ENCODE measurements at regions of chr1 and their contacts with region 1.

Region 1: DNA sequence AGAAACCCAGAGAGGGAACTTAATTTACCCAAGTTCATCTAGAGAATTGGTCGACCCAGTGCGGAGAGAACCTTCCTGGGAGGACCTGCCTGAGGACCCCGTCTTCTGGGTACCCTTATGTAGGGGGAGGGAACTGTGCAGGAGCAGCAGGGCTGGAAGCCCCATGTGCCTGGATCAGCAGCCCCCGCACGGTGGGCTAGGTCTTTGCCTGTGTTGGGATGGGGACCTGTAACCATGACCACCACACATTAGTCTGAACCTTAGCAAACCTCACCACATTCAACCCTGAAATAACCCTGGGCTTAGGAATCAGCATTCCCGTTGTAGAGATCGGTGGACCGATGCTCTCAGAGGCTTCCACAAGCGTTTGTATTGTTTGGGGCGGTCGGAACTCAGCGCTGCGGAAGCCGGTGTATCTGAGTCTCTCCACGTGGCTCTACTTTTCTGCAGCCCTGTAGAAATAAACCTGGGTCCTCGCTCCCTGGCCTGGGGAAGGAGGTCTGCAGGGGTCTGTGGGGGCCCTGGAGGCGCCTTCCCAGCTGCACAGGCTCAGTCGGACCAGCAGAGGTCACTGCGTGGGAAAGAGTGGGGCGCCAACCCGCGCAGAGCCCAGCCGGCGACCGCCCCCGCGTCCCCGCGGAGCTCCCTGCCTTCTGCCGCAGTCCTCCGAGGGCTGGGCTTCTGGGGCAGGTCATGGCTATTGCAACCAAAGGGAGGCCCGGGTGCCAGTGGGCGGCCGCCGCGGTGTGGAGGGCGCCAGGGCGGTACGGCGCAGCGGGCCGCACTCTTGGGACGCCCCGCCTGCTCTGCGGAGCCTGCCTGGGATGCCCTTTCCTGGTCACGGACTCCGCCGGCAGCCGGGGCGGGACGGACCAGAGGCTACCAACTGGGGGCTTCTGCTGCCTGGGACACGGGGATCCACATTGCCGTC is 36.2 kb upstream of the KCNA10 start:
- DNase-seq: peak; percentile 71
- H3K4me3 Mint-ChIP-seq: no peak overlapping the region
- H3K27ac Mint-ChIP-seq: no peak overlapping the region
- H3K4me1 Mint-ChIP-seq: peaks cover 4% of the 10 kb centered on the region
- H3K27me3 Mint-ChIP-seq: peaks cover 42% of the 10 kb centered on the region

Region 2: GRCh38 chr1:110572751-110573150 is 17.6 kb after region 1 on chr1:
- CTCF ChIA-PET with region 1: interaction called, 10 read pairs
- POLR2A ChIA-PET with region 1: no interaction called
- intact Hi-C with region 1: no loop called
- DNase-seq: no peak
- H3K4me3 Mint-ChIP-seq: no peak overlapping the region
- H3K27ac Mint-ChIP-seq: no peak overlapping the region
- H3K4me1 Mint-ChIP-seq: no peaks in the 10 kb centered on the region
- H3K27me3 Mint-ChIP-seq: peaks cover 9% of the 10 kb centered on the region

Region 3: DNA sequence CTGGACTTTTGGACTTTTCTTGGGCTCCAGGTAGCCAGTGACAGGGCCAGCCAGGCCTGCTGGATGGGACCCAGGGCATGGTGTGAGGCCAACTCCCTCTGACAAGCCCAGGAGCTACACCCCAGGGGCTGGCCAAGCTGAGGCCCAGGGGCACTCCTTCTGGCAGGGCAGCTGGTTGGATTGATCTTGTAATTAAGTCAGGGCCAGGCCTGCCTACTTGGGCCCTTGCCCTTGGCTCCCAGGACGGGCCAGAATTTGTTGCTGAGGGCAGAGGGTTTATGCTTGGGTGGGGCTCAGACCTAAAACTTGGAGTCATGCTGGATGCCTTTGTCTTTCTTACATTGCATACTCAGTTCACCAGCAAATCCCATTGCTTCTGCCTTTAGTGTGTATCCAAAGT is 30.3 kb after region 1 on chr1:
- CTCF ChIA-PET with region 1: no interaction called
- POLR2A ChIA-PET with region 1: no interaction called
- intact Hi-C with region 1: no loop called
- DNase-seq: no peak
- H3K4me3 Mint-ChIP-seq: no peak overlapping the region
- H3K27ac Mint-ChIP-seq: no peak overlapping the region
- H3K4me1 Mint-ChIP-seq: no peaks in the 10 kb centered on the region
- H3K27me3 Mint-ChIP-seq: peaks cover 6% of the 10 kb centered on the region

Region 4: DNA sequence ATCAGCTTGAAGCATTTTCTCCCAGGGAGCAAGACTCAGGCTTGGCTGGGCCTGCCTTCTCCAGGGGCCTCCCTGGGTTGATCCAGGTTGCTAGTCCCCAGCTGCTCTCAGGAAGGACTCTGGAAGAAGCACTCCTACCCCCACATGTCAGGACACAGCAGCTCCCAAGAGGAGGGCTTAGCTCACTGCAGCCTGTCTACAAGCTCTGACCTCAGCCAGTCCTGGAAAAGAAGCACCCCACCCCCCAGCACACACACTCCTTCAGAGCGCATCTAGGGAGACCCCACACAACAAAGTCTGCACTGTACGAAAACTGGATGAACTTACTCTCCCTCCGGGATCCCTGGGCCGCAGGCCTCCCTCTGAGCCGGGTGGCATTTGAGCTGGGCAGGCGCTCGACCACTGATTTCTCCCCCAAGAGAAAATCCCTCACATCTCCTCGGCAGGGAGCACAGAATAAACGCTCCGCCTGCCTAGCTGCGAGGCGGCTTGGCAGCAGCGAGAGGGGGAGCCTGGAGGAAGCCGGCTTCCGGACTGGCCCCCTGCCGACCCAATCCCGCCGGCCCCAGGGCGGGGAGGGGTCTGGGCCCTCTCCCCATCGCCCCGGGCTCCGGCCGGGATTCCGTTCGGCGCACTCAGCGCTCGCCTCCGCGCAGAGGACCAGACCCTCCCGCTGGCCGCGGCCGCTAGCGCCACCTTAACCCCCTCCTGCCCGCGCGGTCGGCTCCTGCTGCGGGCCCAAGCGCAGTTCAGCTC is 50.9 kb after region 1 on chr1 and contains the start of gene KCNA2:
- CTCF ChIA-PET with region 1: interaction called, 26 read pairs
- POLR2A ChIA-PET with region 1: no interaction called
- intact Hi-C with region 1: no loop called
- DNase-seq: no peak
- H3K4me3 Mint-ChIP-seq: peak within 1 kb of the TSS; percentile 74
- H3K27ac Mint-ChIP-seq: no peak within 1 kb of the TSS
- H3K4me1 Mint-ChIP-seq: peaks cover 17% of the 10 kb centered on the region
- H3K27me3 Mint-ChIP-seq: peaks cover 44% of the 10 kb centered on the region
- total RNA-seq, gene KCNA2: 0.24 to 0.36 TPM

Measured in activated CD4-positive, alpha-beta memory T cell treated with anti-CD3 and anti-CD28 coated beads for 36 hours (primary cell).